ENCODE measurements at regions of chr3 and their contacts with region 1.

Region 1: DNA sequence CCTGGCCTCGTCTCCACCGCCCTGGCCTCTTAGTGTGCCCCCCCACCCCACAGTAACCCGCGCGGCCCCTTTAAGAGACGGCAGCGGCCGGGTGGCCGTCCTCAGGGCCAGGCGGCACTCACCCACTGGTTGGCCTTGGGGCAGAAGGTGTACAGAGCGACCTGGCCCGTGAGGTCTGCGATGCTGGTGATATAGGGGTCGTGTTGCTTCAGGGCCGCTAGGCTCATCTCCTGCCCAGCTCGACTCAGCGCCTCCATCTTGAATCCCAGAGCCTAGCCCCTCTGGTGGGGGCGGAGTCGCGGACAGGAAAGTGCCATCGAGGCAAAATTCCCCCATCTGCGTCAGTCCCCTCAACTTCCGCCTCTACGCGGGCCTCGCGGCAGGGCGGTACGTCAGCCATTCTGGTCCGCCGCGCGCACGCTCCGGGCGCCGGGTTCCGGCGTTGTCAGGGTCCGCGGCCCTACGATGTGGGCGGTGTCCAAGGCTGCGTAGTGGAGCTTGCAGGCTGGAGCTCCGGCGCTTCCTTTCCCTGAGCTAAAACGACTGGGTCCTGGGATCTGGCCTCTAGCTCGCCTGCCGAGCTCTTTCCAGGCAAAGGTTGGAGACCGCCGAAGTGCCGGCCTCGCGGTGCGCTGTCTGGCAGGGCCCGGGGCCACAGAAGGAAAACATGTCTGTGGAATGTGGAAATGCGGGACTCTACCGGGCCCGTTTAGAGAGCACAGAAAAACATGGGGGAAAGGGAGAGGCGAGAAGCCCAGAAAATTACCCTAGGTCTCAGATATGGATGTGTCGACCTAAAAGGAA is at the start of gene DCP1A:
- DNase-seq: peak; percentile 91 to 98 (median 94)
- ATAC-seq: peak; percentile 95
- H3K4me3 ChIP-seq: peak within 1 kb of the TSS; percentile 95 to 99
- H3K4me3 Mint-ChIP-seq: peak within 1 kb of the TSS; percentile 99
- H3K27ac ChIP-seq: peak within 1 kb of the TSS; percentile 91 to 95
- H3K27ac Mint-ChIP-seq: peak within 1 kb of the TSS; percentile 98
- H3K4me1 ChIP-seq: peaks cover 28% of the 10 kb centered on the region
- H3K4me1 Mint-ChIP-seq: peaks cover 39% of the 10 kb centered on the region
- H3K27me3 ChIP-seq: no peaks in the 10 kb centered on the region
- H3K27me3 Mint-ChIP-seq: no peaks in the 10 kb centered on the region
- CTCF ChIP-seq: no peak
- total RNA-seq, gene DCP1A: 71.8 to 80.4 TPM

Region 2: GRCh38 chr3:52931889-52932288 is 415.6 kb before region 1 on chr3:
- CTCF ChIA-PET with region 1: no interaction called
- POLR2A ChIA-PET with region 1: no interaction called
- intact Hi-C with region 1: no loop called
- DNase-seq: no peak
- ATAC-seq: no peak
- H3K4me3 ChIP-seq: no peak overlapping the region
- H3K4me3 Mint-ChIP-seq: no peak overlapping the region
- H3K27ac ChIP-seq: no peak overlapping the region
- H3K27ac Mint-ChIP-seq: no peak overlapping the region
- H3K4me1 ChIP-seq: peaks cover 5% of the 10 kb centered on the region
- H3K4me1 Mint-ChIP-seq: peaks cover 8% of the 10 kb centered on the region
- H3K27me3 ChIP-seq: no peaks in the 10 kb centered on the region
- H3K27me3 Mint-ChIP-seq: no peaks in the 10 kb centered on the region
- CTCF ChIP-seq: no peak

Region 3: DNA sequence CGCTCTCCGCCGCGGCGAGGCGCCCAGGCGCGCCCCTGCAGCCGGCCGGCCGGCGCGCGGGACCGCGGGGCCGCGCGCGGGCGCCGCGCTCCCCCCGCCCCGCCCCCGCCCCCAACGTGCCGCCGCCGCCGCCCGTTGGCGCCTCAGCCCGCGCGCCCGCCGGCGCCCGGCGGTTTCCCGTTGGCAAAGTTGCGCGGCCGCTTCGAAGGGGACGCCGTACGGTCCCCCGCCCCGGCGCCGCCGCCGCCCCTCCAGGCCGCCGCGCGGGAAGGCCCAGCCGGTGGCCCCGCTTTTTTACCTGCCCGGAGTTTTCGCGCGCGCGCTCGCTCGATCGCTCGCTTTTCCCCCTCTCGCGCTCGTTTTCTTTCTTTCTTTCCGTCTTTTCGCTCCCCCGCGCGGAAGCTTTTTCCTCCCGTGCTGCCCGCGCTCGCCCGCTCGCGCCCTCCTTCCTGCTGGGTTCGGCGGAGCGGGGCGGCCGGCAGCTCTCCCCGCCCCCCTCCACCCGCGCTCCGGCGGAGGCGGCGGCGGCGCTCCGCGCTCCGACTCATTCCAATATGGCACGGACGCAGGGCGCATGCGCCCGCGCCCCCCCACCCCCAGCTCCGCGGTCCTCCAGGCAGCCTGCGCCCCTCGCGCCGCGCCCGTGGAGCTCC is 301.8 kb before region 1 on chr3 and contains the start of gene SFMBT1:
- CTCF ChIA-PET with region 1: no interaction called
- POLR2A ChIA-PET with region 1: no interaction called
- intact Hi-C with region 1: loop called in 1 of 2 experiments (anchors 10 kb)
- DNase-seq: peak; percentile 52 to 91 (median 78)
- ATAC-seq: peak; percentile 49
- H3K4me3 ChIP-seq: peak within 1 kb of the TSS; percentile 85 to 88
- H3K4me3 Mint-ChIP-seq: peak within 1 kb of the TSS; percentile 98
- H3K27ac ChIP-seq: peak within 1 kb of the TSS; percentile 81 to 83
- H3K27ac Mint-ChIP-seq: peak within 1 kb of the TSS; percentile 99
- H3K4me1 ChIP-seq: peaks cover 37% of the 10 kb centered on the region
- H3K4me1 Mint-ChIP-seq: peaks cover 35% of the 10 kb centered on the region
- H3K27me3 ChIP-seq: no peaks in the 10 kb centered on the region
- H3K27me3 Mint-ChIP-seq: no peaks in the 10 kb centered on the region
- CTCF ChIP-seq: no peak
- total RNA-seq, gene SFMBT1: 23.6 to 26.2 TPM

Region 4: DNA sequence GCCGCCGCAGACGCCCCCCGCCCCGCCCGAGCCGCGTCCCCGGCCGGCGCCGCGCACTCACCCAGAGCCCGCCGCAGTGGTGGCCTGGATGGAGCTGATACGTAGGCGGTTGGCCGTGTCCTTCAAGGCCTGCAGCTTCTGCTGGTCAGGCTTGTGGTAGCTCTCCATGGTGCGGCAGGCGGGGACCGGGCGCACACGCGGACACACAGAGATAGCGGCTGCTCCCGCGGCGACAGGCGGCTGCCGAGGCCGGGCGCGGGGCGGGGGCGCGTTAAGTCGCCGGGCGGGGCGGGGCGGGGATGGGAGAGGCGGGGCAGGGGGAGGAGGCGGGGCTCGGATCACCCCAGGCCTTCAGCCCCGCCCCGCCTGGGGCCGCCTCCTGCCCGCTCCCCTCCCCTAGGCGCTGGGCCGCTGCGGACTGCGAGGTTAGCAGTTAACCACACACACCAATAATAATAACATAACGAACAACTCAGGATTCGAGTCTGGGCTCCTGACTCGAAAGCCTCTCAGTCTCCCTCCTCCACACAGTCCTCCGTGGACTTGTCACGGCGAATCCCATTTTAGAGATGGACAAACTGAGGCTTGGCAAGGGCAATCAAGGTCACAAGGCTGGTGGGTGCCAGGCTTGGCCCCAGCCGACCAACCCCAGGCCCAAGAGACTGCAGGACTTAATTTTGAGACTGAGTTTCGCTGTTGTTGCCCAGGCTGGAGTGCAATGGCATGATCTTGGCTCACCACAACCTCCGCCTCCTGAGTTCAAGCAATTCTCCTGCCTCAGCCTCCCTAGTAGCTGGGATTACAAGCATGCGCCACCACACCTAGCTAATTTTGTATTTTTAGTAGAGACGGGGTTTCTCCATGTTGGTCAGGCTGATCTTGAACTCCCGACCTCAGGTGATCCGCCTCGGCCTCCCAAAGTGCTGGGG is 91.4 kb before region 1 on chr3 and contains the start of gene TKT:
- CTCF ChIA-PET with region 1: no interaction called
- POLR2A ChIA-PET with region 1: interaction called, 6 read pairs
- intact Hi-C with region 1: loop called (anchors 1 kb)
- DNase-seq: peak; percentile 50 to 90 (median 77)
- ATAC-seq: peak; percentile 85
- H3K4me3 ChIP-seq: peak within 1 kb of the TSS; percentile 71 to 96
- H3K4me3 Mint-ChIP-seq: peak within 1 kb of the TSS; percentile 91
- H3K27ac ChIP-seq: peak within 1 kb of the TSS; percentile 58 to 60
- H3K27ac Mint-ChIP-seq: peak within 1 kb of the TSS; percentile 82
- H3K4me1 ChIP-seq: peaks cover 27% of the 10 kb centered on the region
- H3K4me1 Mint-ChIP-seq: peaks cover 34% of the 10 kb centered on the region
- H3K27me3 ChIP-seq: no peaks in the 10 kb centered on the region
- H3K27me3 Mint-ChIP-seq: no peaks in the 10 kb centered on the region
- CTCF ChIP-seq: no peak
- total RNA-seq, gene TKT: 94.5 to 99.9 TPM

Region 5: GRCh38 chr3:53303957-53304356 is 43.5 kb before region 1 on chr3:
- CTCF ChIA-PET with region 1: no interaction called
- POLR2A ChIA-PET with region 1: no interaction called
- intact Hi-C with region 1: loop called in 1 of 2 experiments (anchors 2 kb)
- DNase-seq: no peak
- ATAC-seq: no peak
- H3K4me3 ChIP-seq: no peak overlapping the region
- H3K4me3 Mint-ChIP-seq: no peak overlapping the region
- H3K27ac ChIP-seq: no peak overlapping the region
- H3K27ac Mint-ChIP-seq: no peak overlapping the region
- H3K4me1 ChIP-seq: no peaks in the 10 kb centered on the region
- H3K4me1 Mint-ChIP-seq: no peaks in the 10 kb centered on the region
- H3K27me3 ChIP-seq: no peaks in the 10 kb centered on the region
- H3K27me3 Mint-ChIP-seq: no peaks in the 10 kb centered on the region
- CTCF ChIP-seq: no peak

Region 6: DNA sequence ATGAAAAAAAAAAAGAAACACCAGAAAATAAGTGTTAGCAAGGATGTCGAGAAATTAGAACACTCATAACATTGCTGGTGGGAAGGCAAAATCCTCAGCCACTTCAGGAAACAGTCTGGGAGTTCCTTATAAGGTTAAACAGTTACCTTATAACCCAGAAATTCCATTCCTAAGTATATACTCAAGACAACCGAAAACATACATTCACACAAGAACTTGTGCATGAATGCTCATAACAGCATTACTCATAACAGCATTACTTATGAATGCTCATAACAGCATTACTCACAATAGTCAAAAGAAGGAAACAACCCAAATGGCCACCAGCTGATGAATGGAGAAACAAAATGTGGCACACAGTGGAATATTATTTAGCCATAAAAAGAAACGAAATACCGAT is 34.6 kb after region 1 on chr3:
- CTCF ChIA-PET with region 1: no interaction called
- POLR2A ChIA-PET with region 1: no interaction called
- intact Hi-C with region 1: no loop called
- DNase-seq: no peak
- ATAC-seq: no peak
- H3K4me3 ChIP-seq: no peak overlapping the region
- H3K4me3 Mint-ChIP-seq: no peak overlapping the region
- H3K27ac ChIP-seq: no peak overlapping the region
- H3K27ac Mint-ChIP-seq: no peak overlapping the region
- H3K4me1 ChIP-seq: no peaks in the 10 kb centered on the region
- H3K4me1 Mint-ChIP-seq: no peaks in the 10 kb centered on the region
- H3K27me3 ChIP-seq: peaks cover 0 to 6% of the 10 kb centered on the region in 2 experiments
- H3K27me3 Mint-ChIP-seq: peaks cover 30% of the 10 kb centered on the region
- CTCF ChIP-seq: no peak

Region 7: GRCh38 chr3:53891497-53892285 is 544.2 kb after region 1 on chr3 and contains the start of gene SELENOK:
- CTCF ChIA-PET with region 1: no interaction called
- POLR2A ChIA-PET with region 1: interaction called, 9 read pairs
- intact Hi-C with region 1: loop called in 1 of 2 experiments (anchors 5 kb)
- DNase-seq: peak; percentile 92 to 99 (median 96)
- ATAC-seq: peak; percentile 90
- H3K4me3 ChIP-seq: peak within 1 kb of the TSS; percentile 89 to 91
- H3K4me3 Mint-ChIP-seq: peak within 1 kb of the TSS; percentile 93
- H3K27ac ChIP-seq: peak within 1 kb of the TSS; percentile 98 to 99
- H3K27ac Mint-ChIP-seq: peak within 1 kb of the TSS; percentile 99
- H3K4me1 ChIP-seq: peaks cover 37% of the 10 kb centered on the region
- H3K4me1 Mint-ChIP-seq: peaks cover 49% of the 10 kb centered on the region
- H3K27me3 ChIP-seq: no peaks in the 10 kb centered on the region
- H3K27me3 Mint-ChIP-seq: no peaks in the 10 kb centered on the region
- CTCF ChIP-seq: no peak
- total RNA-seq, gene SELENOK: 185 to 187 TPM

Measured in CD8-positive, alpha-beta T cell (primary cell).